H1 (cell line): ENCODE measurements at regions of chr5 and their contacts with region 1.

Region 1: DNA sequence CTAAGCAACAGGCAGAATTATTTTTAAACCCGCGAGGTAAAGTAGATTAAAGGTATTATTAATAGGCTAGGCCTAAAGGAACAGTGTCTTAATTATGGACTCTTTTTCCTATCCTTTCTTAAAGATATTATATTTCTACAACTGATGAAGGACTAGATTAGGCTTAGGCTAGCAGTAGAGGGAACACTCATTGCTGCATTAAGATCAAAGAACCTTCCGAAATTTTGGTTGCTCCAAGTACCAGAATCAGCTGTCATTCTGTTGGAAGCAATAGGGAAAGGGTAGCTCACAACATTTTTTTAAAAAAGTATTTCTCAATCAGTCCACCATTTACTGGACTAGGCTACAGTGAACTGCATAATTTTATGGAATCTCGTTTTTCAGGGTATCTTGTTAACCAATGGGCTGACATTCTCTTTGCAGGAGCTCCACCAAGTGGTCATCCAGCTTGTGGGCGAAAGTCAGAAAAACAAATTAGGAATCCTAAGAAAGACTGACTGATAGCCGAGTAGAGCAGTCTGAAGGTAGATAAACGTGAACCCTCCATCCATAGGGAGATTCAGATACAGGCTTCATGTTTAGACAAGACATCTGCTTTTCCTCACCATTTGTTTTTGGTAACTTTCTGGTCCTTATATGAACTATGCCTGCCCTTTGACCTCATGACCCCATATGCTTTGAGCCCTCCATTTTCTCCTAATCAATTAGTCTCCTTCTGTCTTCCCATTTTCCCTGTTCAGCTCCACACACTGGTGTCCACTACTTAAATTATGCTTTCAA is 103.6 kb upstream of the CHD1 start:
- DNase-seq: no peak
- H3K4me3 ChIP-seq: no peak overlapping the region
- H3K27ac ChIP-seq: no peak overlapping the region
- H3K4me1 ChIP-seq: no peaks in the 10 kb centered on the region
- H3K27me3 ChIP-seq: no peaks in the 10 kb centered on the region
- CTCF ChIP-seq: peak; percentile 7 to 87 (median 78)
- EP300 ChIP-seq: no peak
- POLR2A ChIP-seq: no peak
- RAD21 ChIP-seq: peak; percentile 96 to 97

Region 2: GRCh38 chr5:98735806-98736507 is 296.5 kb before region 1 on chr5:
- CTCF ChIA-PET with region 1: no interaction called
- POLR2A ChIA-PET with region 1: no interaction called
- DNase-seq: no peak
- H3K4me3 ChIP-seq: no peak overlapping the region
- H3K27ac ChIP-seq: no peak overlapping the region
- H3K4me1 ChIP-seq: no peaks in the 10 kb centered on the region
- H3K27me3 ChIP-seq: no peaks in the 10 kb centered on the region
- CTCF ChIP-seq: no peak
- EP300 ChIP-seq: no peak
- POLR2A ChIP-seq: no peak
- RAD21 ChIP-seq: no peak

Region 3: GRCh38 chr5:98905857-98906690 is 126.3 kb before region 1 on chr5:
- CTCF ChIA-PET with region 1: interaction called, 22 read pairs
- POLR2A ChIA-PET with region 1: no interaction called
- DNase-seq: no peak
- H3K4me3 ChIP-seq: no peak overlapping the region
- H3K27ac ChIP-seq: no peak overlapping the region
- H3K4me1 ChIP-seq: peaks cover 0 to 3% (median 0%) of the 10 kb centered on the region in 4 experiments; a peak in 1 of 7 replicates
- H3K27me3 ChIP-seq: no peaks in the 10 kb centered on the region
- CTCF ChIP-seq: peak in 2 of 3 experiments; percentile 30 to 39; a peak in 2 of 4 replicates
- EP300 ChIP-seq: no peak
- POLR2A ChIP-seq: no peak
- RAD21 ChIP-seq: peak in 1 of 2 experiments; percentile 77

Region 4: GRCh38 chr5:98911280-98912040 is 121.0 kb before region 1 on chr5:
- CTCF ChIA-PET with region 1: interaction called, 22 read pairs
- POLR2A ChIA-PET with region 1: no interaction called
- DNase-seq: no peak
- H3K4me3 ChIP-seq: no peak overlapping the region
- H3K27ac ChIP-seq: no peak overlapping the region
- H3K4me1 ChIP-seq: peaks cover 0 to 6% (median 0%) of the 10 kb centered on the region in 4 experiments; a peak in 1 of 7 replicates
- H3K27me3 ChIP-seq: no peaks in the 10 kb centered on the region
- CTCF ChIP-seq: no peak
- EP300 ChIP-seq: no peak
- POLR2A ChIP-seq: no peak
- RAD21 ChIP-seq: no peak

Region 5: GRCh38 chr5:98917433-98917832 is 115.0 kb before region 1 on chr5:
- CTCF ChIA-PET with region 1: interaction called, 15 read pairs
- POLR2A ChIA-PET with region 1: no interaction called
- DNase-seq: no peak
- H3K4me3 ChIP-seq: no peak overlapping the region
- H3K27ac ChIP-seq: no peak overlapping the region
- H3K4me1 ChIP-seq: no peaks in the 10 kb centered on the region
- H3K27me3 ChIP-seq: no peaks in the 10 kb centered on the region
- CTCF ChIP-seq: no peak
- EP300 ChIP-seq: no peak
- POLR2A ChIP-seq: no peak
- RAD21 ChIP-seq: no peak

Region 6: GRCh38 chr5:99068944-99069650 is 36.7 kb after region 1 on chr5:
- CTCF ChIA-PET with region 1: no interaction called
- POLR2A ChIA-PET with region 1: no interaction called
- DNase-seq: no peak
- H3K4me3 ChIP-seq: no peak overlapping the region
- H3K27ac ChIP-seq: no peak overlapping the region
- H3K4me1 ChIP-seq: no peaks in the 10 kb centered on the region
- H3K27me3 ChIP-seq: no peaks in the 10 kb centered on the region; a peak in 1 of 7 replicates
- CTCF ChIP-seq: no peak
- EP300 ChIP-seq: no peak
- POLR2A ChIP-seq: no peak
- RAD21 ChIP-seq: no peak